Aorta (tissue), 5 donors: ENCODE measurements at regions of chr15 and their contacts with region 1.

Region 1: DNA sequence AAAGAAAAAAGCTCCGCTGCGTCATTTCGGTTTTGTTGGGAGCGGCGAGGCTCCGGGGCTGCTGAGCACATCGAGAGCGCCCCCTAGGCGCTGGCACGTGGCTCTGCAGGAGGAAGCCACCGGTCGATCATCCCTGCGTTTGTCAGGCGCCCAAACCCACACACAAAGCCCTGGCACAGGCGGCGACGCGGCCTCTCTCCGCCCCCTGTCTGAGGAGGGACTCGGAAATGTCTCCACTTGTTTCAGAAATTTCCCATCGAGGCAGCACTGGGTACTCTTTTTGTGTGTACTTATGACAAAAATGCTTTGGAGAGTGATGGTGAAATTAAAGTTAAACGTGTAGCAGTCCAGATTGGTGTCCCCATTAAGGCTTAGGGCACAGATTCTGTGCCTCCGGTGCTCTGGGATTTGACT is 407.3 kb upstream of the ONECUT1 start:
- DNase-seq: peak; percentile 53 to 86
- ATAC-seq: peak; percentile 57
- H3K4me3 ChIP-seq: no peak overlapping the region
- H3K27ac ChIP-seq: no peak overlapping the region
- H3K4me1 ChIP-seq: no peaks in the 10 kb centered on the region
- H3K27me3 ChIP-seq: no peaks in the 10 kb centered on the region

Region 2: DNA sequence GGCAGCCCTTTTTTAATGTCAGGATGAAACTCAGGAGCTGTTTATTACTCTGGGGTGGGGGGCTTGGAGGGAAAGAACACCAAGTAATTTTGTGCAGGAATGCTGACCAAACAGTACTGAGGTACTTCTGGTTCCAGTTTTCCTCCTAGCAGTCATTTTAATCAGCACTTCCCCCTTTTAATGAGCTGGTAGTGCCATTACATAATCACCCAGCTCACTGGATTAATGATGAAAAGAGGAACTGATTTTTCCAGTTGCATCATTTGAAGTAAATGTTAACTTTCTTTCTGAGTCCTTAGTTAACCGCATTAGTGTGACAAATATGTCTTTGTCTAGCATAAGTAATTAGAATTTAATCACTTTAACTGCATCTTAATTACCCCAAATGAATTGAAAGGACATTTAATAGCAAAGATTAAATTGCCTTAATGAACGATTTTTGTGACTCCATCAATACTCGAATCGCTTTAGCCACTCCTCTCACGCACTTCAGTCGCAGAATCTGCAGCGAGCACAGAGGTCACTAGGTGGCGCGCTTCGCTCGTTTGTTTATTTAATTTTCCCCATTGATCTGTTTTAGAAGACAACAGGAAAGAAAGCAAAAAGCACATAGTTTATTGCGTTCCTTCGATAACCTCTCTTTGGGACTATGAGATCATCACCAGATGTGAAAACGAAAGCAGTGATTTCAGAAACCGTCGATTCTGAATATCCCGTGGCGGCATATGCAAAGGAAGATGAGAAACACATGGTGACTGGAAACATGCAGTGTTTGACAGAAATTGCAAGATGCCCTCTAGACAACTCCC is 417.1 kb before region 1 on chr15:
- intact Hi-C with region 1: loop called (anchors 5 to 10 kb)
- DNase-seq: peak in 1 of 2 donors; percentile 58
- ATAC-seq: no peak
- H3K4me3 ChIP-seq: peak overlapping the region in 1 of 2 donors; percentile 34
- H3K27ac ChIP-seq: no peak overlapping the region
- H3K4me1 ChIP-seq: no peaks in the 10 kb centered on the region
- H3K27me3 ChIP-seq: no peaks in the 10 kb centered on the region